T-cell (primary cell): ENCODE measurements at regions of chr2 and their contacts with region 1.

Region 1: DNA sequence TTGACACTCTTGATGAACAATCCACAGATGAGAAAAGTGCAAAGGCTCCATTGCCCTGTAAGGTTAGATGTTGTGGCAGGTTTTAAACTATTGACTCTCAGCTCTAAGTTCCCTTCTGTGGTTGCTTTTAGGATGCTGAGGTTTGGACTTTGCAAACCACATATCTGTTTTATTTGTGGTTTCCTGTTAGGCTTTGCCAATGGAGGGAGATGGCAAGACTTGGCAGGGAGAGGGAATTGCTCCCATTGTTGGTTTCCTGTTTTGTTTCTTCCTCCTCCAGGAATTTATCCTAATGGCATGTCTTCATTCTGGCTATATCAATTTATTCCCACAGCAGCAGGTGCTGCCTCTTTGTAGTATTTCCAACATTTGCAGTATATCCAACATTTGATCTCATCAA is 772.3 kb downstream of the LRRTM4 start:
- DNase-seq: no peak
- ATAC-seq: no peak
- H3K4me3 ChIP-seq: no peak overlapping the region
- H3K4me3 Mint-ChIP-seq: no peak overlapping the region
- H3K27ac ChIP-seq: no peak overlapping the region
- H3K27ac Mint-ChIP-seq: no peak overlapping the region
- H3K4me1 ChIP-seq: no peaks in the 10 kb centered on the region
- H3K4me1 Mint-ChIP-seq: no peaks in the 10 kb centered on the region
- H3K27me3 ChIP-seq: no peaks in the 10 kb centered on the region
- H3K27me3 Mint-ChIP-seq: no peaks in the 10 kb centered on the region

Region 2: GRCh38 chr2:76721226-76721625 is 28.6 kb before region 1 on chr2:
- CTCF ChIA-PET with region 1: no interaction called
- POLR2A ChIA-PET with region 1: interaction called in 1 of 2 experiments, 23 read pairs
- DNase-seq: no peak
- ATAC-seq: no peak
- H3K4me3 ChIP-seq: no peak overlapping the region
- H3K4me3 Mint-ChIP-seq: no peak overlapping the region
- H3K27ac ChIP-seq: no peak overlapping the region
- H3K27ac Mint-ChIP-seq: no peak overlapping the region
- H3K4me1 ChIP-seq: no peaks in the 10 kb centered on the region
- H3K4me1 Mint-ChIP-seq: no peaks in the 10 kb centered on the region
- H3K27me3 ChIP-seq: no peaks in the 10 kb centered on the region
- H3K27me3 Mint-ChIP-seq: no peaks in the 10 kb centered on the region